Activated naive CD8-positive, alpha-beta T cell treated with anti-CD3 and anti-CD28 coated beads, Interleukin-2, amount 10 ng/mL, durations not matched to agents 7 days and 5 days (primary cell): ENCODE measurements at regions of chr16 and their contacts with region 1.

Region 1: DNA sequence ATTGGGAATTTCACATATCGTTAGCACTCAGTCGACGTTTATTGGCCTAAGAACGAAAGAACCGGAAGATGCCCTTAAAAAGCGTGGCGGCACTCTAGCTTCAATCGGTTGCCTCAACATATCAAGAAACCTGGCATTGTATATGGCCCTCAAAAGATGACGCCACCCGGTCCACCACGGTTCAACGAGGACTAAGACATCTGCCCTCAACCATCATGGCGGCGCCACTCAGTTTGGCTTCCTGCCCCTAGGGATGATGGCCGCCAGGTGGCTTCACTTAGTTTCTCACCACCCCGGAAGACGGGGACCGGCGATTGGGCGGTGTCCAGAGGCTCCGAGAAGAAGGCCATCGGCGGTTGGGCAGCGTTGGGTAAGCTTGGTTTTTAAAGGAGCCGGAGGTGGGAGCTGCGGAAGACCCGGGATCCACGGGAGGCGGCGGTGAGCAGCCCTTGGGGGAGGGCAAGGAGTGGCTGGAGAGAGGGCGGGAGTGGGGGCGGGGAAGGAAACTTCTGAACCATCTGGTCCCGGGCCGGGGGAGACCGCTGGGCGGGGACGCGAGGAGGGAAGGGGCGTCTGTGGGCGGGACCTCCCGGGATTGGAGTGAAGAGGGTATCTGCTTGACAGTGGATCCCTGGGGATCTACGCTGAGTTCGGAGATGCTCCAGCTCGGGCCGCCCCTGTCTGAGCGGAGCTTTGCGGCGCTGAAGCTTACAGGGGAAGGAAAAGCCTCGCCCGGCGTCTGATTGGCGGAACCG is at the start of gene PRR14:
- DNase-seq: peak; percentile 94
- ATAC-seq: peak; percentile 85
- H3K4me3 Mint-ChIP-seq: peak within 1 kb of the TSS; percentile 98
- H3K27ac Mint-ChIP-seq: peak within 1 kb of the TSS; percentile 99
- H3K4me1 Mint-ChIP-seq: peaks cover 28% of the 10 kb centered on the region
- H3K27me3 Mint-ChIP-seq: no peaks in the 10 kb centered on the region
- total RNA-seq, gene PRR14: 89.7 to 97.1 TPM

Region 2: DNA sequence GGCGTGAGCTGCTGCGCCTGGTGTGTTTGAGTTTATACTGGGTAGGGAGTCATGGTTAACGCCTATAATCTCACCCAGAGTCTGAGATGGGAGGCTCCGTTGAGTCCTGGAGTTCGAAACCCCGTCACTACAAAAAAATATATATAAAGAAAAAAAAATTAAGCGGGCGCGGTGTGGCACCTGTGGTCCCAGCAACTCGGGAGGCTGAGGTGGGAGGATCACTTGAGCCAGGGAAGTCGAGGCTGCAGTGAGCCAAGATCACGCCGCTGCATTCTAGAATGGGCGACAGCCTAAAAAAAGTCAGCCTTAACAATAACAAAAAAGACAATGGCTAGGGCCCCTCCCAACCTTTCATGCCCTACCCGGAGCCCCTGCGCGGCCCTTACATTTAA is 17.0 kb before region 1 on chr16:
- POLR2A ChIA-PET with region 1: interaction called, 24 read pairs
- DNase-seq: no peak
- ATAC-seq: no peak
- H3K4me3 Mint-ChIP-seq: peak overlapping the region; percentile 88
- H3K27ac Mint-ChIP-seq: peak overlapping the region; percentile 92
- H3K4me1 Mint-ChIP-seq: peaks cover 19% of the 10 kb centered on the region
- H3K27me3 Mint-ChIP-seq: no peaks in the 10 kb centered on the region

Region 3: DNA sequence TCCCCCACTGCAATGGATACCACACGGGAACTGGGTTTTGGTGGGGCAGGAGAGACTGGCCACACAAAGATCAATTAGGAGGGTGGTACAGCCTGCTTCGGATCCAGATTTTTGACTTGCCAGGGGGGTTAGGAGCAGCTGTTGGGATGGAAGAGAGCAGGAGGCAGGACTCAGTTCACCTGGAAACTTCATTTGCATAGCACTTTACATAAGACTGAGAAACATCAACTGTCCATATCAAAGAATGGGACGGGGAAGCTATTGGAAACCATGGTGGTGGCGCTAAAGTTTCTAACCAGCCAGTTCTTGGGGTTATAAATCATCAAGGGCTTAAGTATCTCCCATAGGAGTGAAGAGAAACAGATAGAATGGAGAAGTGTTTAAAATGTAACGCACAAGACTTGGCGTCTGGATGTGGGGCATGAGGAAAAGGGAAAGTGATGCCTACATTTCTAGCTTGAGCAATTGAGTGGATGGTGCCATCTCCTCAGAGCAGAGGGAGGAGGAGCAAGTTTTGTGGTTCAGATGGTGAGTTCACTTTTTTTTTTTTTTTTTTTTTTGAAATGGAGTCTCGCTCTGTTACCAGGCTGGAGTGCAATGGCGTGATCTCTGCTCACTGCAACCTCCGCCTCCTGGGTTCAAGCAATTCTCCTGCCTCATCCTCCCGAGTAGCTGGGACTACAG is 42.0 kb after region 1 on chr16:
- POLR2A ChIA-PET with region 1: interaction called, 19 read pairs
- DNase-seq: no peak
- ATAC-seq: no peak
- H3K4me3 Mint-ChIP-seq: no peak overlapping the region
- H3K27ac Mint-ChIP-seq: no peak overlapping the region
- H3K4me1 Mint-ChIP-seq: peaks cover 19% of the 10 kb centered on the region
- H3K27me3 Mint-ChIP-seq: no peaks in the 10 kb centered on the region

Region 4: GRCh38 chr16:30698139-30698815 is 47.7 kb after region 1 on chr16:
- POLR2A ChIA-PET with region 1: interaction called, 19 read pairs
- DNase-seq: peak; percentile 99
- ATAC-seq: peak; percentile 75
- H3K4me3 Mint-ChIP-seq: peak overlapping the region; percentile 100
- H3K27ac Mint-ChIP-seq: peak overlapping the region; percentile 99
- H3K4me1 Mint-ChIP-seq: peaks cover 35% of the 10 kb centered on the region
- H3K27me3 Mint-ChIP-seq: no peaks in the 10 kb centered on the region